ENCODE measurements at regions of chr2 and their contacts with region 1.

Region 1: GRCh38 chr2:238024986-238025385 is 35.8 kb upstream of the SCLY start:
- DNase-seq: peak; percentile 72
- H3K4me3 Mint-ChIP-seq: peak overlapping the region; percentile 31
- H3K27ac Mint-ChIP-seq: peak overlapping the region; percentile 65
- H3K4me1 Mint-ChIP-seq: peaks cover 23% of the 10 kb centered on the region
- H3K27me3 Mint-ChIP-seq: no peaks in the 10 kb centered on the region

Region 2: GRCh38 chr2:238060542-238061314 is 35.7 kb after region 1 on chr2 and contains the start of gene SCLY:
- intact Hi-C with region 1: loop called (anchors 5 kb)
- DNase-seq: peak; percentile 98
- H3K4me3 Mint-ChIP-seq: peak within 1 kb of the TSS; percentile 91
- H3K27ac Mint-ChIP-seq: peak within 1 kb of the TSS; percentile 95
- H3K4me1 Mint-ChIP-seq: peaks cover 44% of the 10 kb centered on the region
- H3K27me3 Mint-ChIP-seq: peaks cover 6% of the 10 kb centered on the region
- total RNA-seq, gene SCLY: 109 TPM in 2 replicates